ENCODE measurements at regions of chr6 and their contacts with region 1.

Region 1: DNA sequence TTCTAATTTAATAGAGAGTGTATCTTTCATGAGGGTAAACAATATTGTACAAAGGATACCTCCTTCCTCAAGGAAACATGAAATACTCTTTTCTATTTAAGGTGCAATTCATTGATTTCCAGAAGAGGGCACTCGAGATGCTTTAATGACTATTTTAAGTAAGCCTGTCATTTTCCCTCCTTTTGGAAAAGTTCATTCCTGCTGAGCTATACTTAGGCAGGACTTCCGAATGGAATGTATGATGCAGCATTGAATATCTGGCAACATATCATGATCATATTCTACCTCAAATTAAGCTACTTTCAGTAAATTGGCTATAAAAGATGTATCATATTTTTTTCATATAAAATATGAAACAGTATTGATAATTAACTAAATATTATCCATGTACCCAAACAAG is 5.0 kb downstream of the DST start:
- DNase-seq: no peak

Region 2: GRCh38 chr6:55621244-55621643 is 1016.4 kb before region 1 on chr6:
- intact Hi-C with region 1: loop called in 1 of 2 experiments (anchors 10 kb)
- DNase-seq: no peak

Region 3: GRCh38 chr6:56699066-56699654 is 61.5 kb after region 1 on chr6:
- intact Hi-C with region 1: loop called (anchors 2 to 10 kb)
- DNase-seq: no peak

Region 4: DNA sequence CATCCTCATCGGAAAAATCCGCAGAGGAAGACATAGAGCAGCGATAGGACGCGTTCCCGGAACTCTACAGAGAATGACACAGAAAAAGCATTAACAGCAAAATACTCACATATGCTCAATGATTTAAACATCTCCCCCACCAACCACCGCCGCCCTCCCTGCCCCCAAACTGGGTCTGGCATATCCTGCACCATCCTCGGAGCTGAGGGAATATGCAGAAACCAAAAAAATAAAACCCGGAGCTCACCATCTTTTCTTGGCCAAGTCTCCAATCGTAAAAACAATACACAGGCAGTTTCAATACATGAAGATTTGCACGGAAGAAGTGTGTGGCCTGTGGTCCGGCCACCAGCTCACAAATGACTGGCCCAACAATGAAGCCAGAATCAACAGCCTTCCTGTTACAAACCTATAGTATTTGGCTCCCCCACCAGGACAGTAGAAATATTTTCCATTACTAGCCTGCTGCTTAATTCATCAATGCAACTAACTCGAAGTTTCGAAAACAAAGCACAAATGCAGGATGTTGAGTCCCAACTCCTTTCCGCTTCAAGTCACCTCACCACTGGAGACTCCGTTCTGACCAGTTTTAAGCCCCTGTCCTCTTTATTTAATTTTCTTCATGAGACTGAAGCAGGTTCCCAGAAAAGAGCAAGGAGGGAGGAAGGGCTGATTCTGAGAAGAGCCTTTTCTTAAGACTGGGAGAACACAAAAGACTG is 214.1 kb after region 1 on chr6:
- intact Hi-C with region 1: loop called in 1 of 2 experiments (anchors 5 kb)
- DNase-seq: no peak

Measured in posterior vena cava (tissue), 2 donors.